ENCODE measurements at regions of chr17 and their contacts with region 1.

Region 1: DNA sequence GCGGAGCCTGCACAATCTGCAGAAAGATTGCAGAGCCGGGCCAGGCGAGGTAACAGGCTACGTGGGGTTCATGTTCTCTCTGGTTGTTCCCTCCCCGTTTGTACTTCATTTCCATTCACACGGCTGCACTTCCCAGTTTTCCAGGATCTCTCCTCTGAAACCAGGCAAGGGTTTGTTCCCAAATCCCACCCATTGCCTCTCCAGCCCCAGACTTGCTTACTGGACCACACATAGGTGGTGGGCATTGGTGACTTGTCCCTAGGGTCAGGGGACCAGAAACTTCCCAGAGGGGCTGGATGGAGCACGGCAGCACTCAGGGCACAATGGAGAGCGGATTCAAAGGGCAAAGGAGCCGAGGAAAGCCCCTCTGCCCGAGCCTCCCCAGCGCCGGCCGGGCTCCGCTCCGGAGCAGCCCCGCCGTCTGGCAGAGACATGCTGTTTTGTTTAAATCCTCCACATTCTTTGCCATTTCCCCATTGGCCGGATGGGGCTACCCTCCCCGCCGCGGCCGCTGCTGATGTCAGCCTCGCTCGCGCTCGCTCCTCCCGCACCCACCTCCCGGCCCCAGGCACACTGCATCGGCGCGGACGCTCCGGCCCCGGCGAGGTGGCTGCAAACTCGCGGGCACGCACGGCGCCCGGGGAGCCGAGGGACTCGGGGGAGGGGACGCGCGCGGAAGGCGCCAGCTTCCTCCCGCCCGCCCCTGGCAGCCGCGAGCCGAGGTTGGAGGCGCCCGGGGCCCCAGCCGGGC is at the start of gene PITPNC1:
- DNase-seq: peak; percentile 92
- ATAC-seq: peak; percentile 74
- H3K4me3 Mint-ChIP-seq: peak within 1 kb of the TSS; percentile 73
- H3K27ac Mint-ChIP-seq: peak within 1 kb of the TSS; percentile 90
- H3K4me1 Mint-ChIP-seq: peaks cover 40% of the 10 kb centered on the region
- H3K27me3 Mint-ChIP-seq: no peaks in the 10 kb centered on the region
- CTCF ChIP-seq: no peak
- total RNA-seq, gene PITPNC1: 51.8 to 56.3 TPM

Region 2: DNA sequence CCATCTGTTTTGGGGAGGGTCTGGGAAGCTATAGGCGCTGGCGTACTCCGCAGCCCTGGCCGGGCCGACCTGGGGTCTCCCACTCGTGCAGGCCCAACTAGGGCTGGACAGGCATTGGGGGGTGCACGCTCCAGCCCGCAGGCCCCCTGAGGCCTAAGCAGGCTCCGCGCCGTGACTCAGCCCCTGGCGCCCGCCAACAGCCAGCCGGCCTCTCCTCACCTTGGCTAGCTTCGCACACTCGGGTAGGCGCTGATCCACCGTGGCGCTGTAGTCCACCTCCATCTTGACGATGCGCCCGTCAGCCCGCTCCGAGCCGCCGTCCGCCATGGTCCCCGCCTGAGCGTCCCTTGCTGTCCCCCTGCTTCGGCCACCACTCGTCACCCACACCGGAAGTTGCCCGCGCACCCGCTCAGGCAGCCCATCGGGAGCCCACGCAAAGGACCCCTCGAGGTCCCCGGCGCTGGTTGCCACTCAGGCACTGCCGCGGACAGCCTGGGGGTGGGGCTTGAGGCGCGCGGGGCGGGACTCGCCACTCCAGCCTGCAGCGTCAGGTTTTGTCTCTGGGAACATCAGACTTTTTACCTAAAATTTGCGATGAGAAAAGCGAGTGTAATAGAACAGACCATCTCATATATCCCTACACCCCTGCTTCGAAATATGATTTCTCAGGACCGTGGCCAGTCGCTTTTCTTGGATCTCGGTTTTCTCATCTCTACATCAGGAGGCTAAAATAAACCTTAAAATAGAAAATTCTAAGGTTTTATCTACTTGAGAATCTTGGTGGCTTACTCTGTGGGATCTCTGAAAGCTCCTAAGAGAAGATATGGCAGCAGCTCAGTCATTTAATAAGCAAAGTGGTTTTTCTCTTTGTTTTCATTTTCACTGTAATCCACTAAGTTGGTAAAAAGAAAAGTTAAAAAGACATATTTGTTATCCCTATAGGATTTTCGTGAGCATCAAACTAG is 10.4 kb before region 1 on chr17 and contains the start of gene PSMD12:
- CTCF ChIA-PET with region 1: interaction called, 68 read pairs
- POLR2A ChIA-PET with region 1: interaction called, 48 read pairs
- intact Hi-C with region 1: no loop called
- DNase-seq: peak; percentile 94
- ATAC-seq: peak; percentile 94
- H3K4me3 Mint-ChIP-seq: peak within 1 kb of the TSS; percentile 97
- H3K27ac Mint-ChIP-seq: peak within 1 kb of the TSS; percentile 96
- H3K4me1 Mint-ChIP-seq: peaks cover 43% of the 10 kb centered on the region
- H3K27me3 Mint-ChIP-seq: no peaks in the 10 kb centered on the region
- CTCF ChIP-seq: no peak
- total RNA-seq, gene PSMD12: 80.9 to 89.1 TPM

Region 3: DNA sequence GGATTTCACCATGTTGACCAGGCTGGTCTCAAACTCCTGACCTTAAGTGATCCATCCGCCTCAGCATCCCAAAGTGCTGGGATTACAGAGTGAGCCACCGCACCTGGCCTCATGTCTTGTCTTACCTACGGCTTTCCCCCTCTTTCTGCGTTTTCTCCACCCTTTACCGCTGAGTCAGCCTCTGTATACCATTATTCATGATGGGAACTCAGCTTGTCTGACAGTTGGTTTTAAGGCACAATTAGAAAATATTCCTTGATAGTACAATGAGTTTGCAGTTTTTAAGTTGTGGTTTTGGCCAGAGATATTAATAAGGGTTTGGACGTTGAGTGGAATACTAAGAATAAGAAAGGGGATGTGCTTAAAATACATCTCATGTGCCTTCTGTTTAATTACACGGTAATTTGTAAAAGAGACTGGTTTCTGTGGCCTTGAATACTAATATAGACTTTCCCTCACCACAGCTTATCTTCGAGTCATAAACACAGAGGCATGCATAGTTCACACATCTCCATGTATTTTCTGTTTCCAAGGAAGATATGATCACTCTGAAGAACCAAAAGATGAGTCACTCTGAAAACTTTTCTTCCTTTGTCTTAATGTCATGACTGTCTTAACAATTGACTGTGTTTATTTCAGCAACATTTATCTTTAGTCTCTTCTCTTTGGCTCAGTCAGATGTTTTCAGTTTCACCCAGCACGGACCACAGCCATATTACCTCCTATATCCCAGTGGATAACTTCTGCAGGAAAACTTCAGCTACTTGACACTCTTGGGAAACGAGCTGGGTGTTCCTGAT is 54.5 kb after region 1 on chr17:
- CTCF ChIA-PET with region 1: interaction called, 28 read pairs
- POLR2A ChIA-PET with region 1: interaction called, 16 read pairs
- intact Hi-C with region 1: loop called (anchors 5 kb)
- DNase-seq: peak; percentile 36
- ATAC-seq: peak; percentile 69
- H3K4me3 Mint-ChIP-seq: peak overlapping the region; percentile 6
- H3K27ac Mint-ChIP-seq: peak overlapping the region; percentile 84
- H3K4me1 Mint-ChIP-seq: peaks cover 69% of the 10 kb centered on the region
- H3K27me3 Mint-ChIP-seq: no peaks in the 10 kb centered on the region
- CTCF ChIP-seq: no peak

Region 4: DNA sequence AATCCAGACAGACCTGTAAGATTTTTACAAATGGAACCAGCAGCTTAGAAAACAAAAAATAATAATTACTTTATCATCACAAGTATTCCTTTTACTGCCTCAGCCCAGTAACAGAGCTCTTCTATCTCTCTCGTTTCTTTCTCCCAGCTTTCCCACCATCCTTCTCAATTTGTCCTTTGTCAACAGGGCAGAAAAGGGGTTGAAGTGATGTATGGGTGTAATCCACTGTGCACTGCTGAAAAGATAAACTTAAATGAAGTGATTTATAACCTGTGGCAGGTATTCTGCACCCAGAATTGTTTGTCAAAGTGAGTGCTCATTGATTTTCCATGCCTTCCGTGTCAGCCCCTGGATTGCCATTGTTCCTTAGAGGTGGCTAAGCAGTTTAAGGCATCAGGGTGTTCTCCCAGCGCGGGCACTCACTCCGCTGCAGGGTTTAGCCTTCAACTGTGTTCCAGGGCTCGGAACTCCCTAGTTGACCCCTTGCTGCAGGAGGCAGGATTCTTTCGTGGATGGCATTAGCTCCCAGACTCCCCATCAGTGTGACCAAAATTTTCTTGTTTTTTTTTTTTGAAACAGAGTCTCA is 83.1 kb after region 1 on chr17:
- CTCF ChIA-PET with region 1: interaction called, 27 read pairs
- POLR2A ChIA-PET with region 1: interaction called, 6 read pairs
- intact Hi-C with region 1: no loop called
- DNase-seq: no peak
- ATAC-seq: no peak
- H3K4me3 Mint-ChIP-seq: no peak overlapping the region
- H3K27ac Mint-ChIP-seq: peak overlapping the region; percentile 3
- H3K4me1 Mint-ChIP-seq: peaks cover 72% of the 10 kb centered on the region
- H3K27me3 Mint-ChIP-seq: no peaks in the 10 kb centered on the region
- CTCF ChIP-seq: no peak

Region 5: DNA sequence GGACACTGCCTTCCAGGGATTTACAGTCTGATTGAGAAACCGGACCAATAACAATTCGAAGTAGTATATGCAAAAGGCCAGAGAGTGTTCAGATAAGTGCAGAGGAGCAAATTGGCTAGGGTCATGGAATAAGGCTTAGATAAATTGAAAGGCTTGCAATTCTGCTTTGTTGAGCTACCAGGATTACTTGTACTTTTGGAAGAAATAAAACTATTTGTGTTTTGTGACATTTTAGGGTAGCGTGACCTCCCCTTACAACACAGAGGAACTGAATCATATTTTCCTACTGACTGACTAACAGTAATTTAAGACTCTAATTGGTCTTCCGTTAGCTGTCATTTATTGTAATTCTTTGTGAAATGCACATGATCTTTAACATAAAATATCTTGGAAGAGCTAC is 104.9 kb after region 1 on chr17:
- CTCF ChIA-PET with region 1: interaction called, 201 read pairs
- POLR2A ChIA-PET with region 1: interaction called, 86 read pairs
- intact Hi-C with region 1: no loop called
- DNase-seq: no peak
- ATAC-seq: no peak
- H3K4me3 Mint-ChIP-seq: peak overlapping the region; percentile 50
- H3K27ac Mint-ChIP-seq: peak overlapping the region; percentile 92
- H3K4me1 Mint-ChIP-seq: peaks cover 78% of the 10 kb centered on the region
- H3K27me3 Mint-ChIP-seq: no peaks in the 10 kb centered on the region
- CTCF ChIP-seq: no peak

Region 6: GRCh38 chr17:67629971-67630320 is 253.0 kb after region 1 on chr17:
- CTCF ChIA-PET with region 1: interaction called, 43 read pairs
- POLR2A ChIA-PET with region 1: no interaction called
- intact Hi-C with region 1: no loop called
- DNase-seq: no peak
- ATAC-seq: no peak
- H3K4me3 Mint-ChIP-seq: no peak overlapping the region
- H3K27ac Mint-ChIP-seq: no peak overlapping the region
- H3K4me1 Mint-ChIP-seq: no peaks in the 10 kb centered on the region
- H3K27me3 Mint-ChIP-seq: no peaks in the 10 kb centered on the region
- CTCF ChIP-seq: no peak